Endothelial cell of umbilical vein (primary cell): ENCODE measurements at regions of chr2 and their contacts with region 1.

Region 1: GRCh38 chr2:237154082-237154638 is 68.5 kb downstream of the COPS8 start:
- DNase-seq: peak; percentile 59
- H3K4me3 ChIP-seq: no peak overlapping the region
- H3K27ac ChIP-seq: no peak overlapping the region
- H3K4me1 ChIP-seq: peaks cover 8% of the 10 kb centered on the region
- H3K27me3 ChIP-seq: no peaks in the 10 kb centered on the region
- CTCF ChIP-seq: peak; percentile 73 to 75
- POLR2A ChIP-seq: no peak

Region 2: DNA sequence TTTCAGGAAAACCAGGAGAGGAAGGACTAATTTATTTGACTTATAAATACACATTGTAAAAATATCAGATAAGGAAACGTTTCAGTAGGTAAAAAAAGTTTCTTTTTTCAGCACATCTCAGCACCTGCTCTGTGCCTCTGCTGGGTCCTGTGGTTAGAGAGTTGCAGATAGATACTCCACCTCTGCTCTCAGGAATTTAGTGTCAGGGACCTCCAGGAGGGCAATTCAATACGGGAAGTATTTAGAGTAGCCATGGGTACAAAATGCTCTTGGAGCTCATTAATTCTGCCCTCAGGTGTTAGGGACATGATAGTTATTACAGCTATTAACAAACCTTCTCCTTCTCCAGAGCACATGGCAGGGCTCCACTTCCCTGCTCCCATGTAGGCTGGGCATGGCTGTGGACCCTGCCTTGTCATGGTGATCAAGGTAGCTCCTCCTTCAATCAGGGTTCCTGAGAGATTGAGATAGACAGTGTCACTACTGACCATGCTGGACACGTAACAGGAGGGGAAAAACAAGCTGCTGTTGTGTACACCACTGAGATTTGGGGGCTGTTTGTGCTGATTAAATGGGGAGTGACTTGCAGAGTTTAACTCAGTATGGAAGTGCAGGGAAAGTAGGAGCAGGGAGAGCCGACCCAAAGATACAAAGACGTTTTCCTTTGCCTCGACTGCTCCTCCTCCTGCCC is 254.1 kb before region 1 on chr2:
- CTCF ChIA-PET with region 1: no interaction called
- POLR2A ChIA-PET with region 1: no interaction called
- dilution Hi-C with region 1: no loop called
- intact Hi-C with region 1: no loop called
- DNase-seq: no peak
- H3K4me3 ChIP-seq: no peak overlapping the region
- H3K27ac ChIP-seq: no peak overlapping the region
- H3K4me1 ChIP-seq: no peaks in the 10 kb centered on the region
- H3K27me3 ChIP-seq: peaks cover 0 to 2% of the 10 kb centered on the region in 2 experiments
- CTCF ChIP-seq: no peak
- POLR2A ChIP-seq: no peak

Region 3: DNA sequence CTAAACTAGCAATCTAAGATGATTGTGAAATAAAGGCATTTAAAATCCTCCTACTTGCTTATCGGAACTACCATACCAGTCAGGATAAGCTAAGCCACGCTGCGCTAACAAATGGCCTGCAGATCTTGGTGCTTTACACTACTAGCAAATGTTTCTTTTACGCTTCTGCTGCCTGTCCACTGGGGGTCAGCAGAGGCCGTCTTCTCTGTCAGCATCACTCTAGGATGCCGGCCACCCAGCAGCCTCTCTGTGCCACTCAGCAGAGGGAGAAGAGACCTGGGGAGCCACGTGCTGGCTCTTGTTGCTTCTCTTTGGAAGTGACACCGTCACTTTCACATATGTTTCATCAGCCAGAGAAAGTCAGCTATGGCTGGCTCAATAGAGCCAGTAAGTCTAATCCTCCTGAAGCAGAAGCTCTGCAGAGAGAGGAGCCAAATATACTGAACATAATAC is 31.9 kb before region 1 on chr2:
- CTCF ChIA-PET with region 1: interaction called, 7 read pairs
- POLR2A ChIA-PET with region 1: no interaction called
- dilution Hi-C with region 1: no loop called
- intact Hi-C with region 1: loop called (anchors 2 kb)
- DNase-seq: peak; percentile 64
- H3K4me3 ChIP-seq: no peak overlapping the region
- H3K27ac ChIP-seq: no peak overlapping the region
- H3K4me1 ChIP-seq: peaks cover 3% of the 10 kb centered on the region
- H3K27me3 ChIP-seq: no peaks in the 10 kb centered on the region
- CTCF ChIP-seq: peak; percentile 64 to 73
- POLR2A ChIP-seq: no peak

Region 4: GRCh38 chr2:237291138-237291792 is 137.1 kb after region 1 on chr2:
- CTCF ChIA-PET with region 1: interaction called, 3 read pairs
- POLR2A ChIA-PET with region 1: no interaction called
- dilution Hi-C with region 1: no loop called
- intact Hi-C with region 1: loop called (anchors 2 kb)
- DNase-seq: peak; percentile 99
- H3K4me3 ChIP-seq: peak overlapping the region in 2 of 3 experiments; percentile 15 to 36
- H3K27ac ChIP-seq: peak overlapping the region; percentile 95
- H3K4me1 ChIP-seq: peaks cover 35% of the 10 kb centered on the region
- H3K27me3 ChIP-seq: no peaks in the 10 kb centered on the region
- CTCF ChIP-seq: no peak
- POLR2A ChIP-seq: no peak

Region 5: GRCh38 chr2:237322564-237322963 is 168.4 kb after region 1 on chr2:
- CTCF ChIA-PET with region 1: no interaction called
- POLR2A ChIA-PET with region 1: no interaction called
- dilution Hi-C with region 1: no loop called
- intact Hi-C with region 1: loop called (anchors 5 kb)
- DNase-seq: no peak
- H3K4me3 ChIP-seq: no peak overlapping the region
- H3K27ac ChIP-seq: no peak overlapping the region
- H3K4me1 ChIP-seq: no peaks in the 10 kb centered on the region
- H3K27me3 ChIP-seq: peaks cover 4 to 7% of the 10 kb centered on the region in 2 experiments
- CTCF ChIP-seq: peak in 1 of 2 donors; percentile 42
- POLR2A ChIP-seq: no peak

Region 6: GRCh38 chr2:237413777-237414661 is 259.9 kb after region 1 on chr2 and contains the start of gene COL6A3:
- CTCF ChIA-PET with region 1: interaction called, 22 read pairs
- POLR2A ChIA-PET with region 1: no interaction called
- dilution Hi-C with region 1: no loop called
- intact Hi-C with region 1: loop called (anchors 1 kb)
- DNase-seq: no peak
- H3K4me3 ChIP-seq: no peak within 1 kb of the TSS
- H3K27ac ChIP-seq: no peak within 1 kb of the TSS
- H3K4me1 ChIP-seq: no peaks in the 10 kb centered on the region
- H3K27me3 ChIP-seq: peaks cover 7 to 15% of the 10 kb centered on the region in 2 experiments
- CTCF ChIP-seq: no peak
- POLR2A ChIP-seq: no peak
- total RNA-seq, gene COL6A3: not detected in 2 replicates

Region 7: DNA sequence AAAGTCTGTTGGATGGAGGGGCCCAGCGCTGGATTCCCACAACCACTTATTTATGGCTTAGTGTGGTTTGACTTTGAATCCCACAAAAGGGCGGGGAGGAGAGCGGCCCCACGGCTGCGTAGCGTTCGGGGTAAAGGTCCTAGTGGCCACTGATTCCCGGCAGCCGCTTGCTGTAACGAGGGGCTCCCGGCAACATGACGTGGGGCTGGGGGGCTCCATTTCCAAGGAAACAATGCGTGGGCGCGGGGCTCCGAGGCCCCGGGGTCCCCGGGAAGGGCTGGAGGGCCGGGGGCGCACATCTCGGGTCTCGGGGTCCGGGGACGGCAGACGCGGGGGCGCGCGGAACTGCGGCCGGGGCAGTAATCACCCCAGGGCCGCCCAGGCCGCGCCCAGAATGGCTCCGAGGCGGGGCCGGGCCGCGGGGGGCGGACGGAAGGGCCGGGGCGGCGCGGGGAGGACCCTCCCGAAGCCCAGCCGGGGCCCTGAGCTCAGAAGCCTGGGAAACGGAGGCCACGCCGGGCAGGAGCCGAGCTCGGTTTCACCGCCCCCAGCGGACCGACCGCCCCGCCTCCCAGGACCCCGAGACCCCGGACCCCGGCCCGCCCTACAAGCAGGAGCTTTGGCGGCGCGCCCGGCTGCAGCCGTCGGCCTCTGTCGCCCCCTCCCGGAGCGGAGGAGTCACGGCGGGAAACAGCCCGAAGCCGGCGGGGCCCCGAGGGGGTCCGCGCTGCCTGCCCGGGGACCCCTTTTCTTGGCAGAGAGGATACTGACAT is 321.0 kb after region 1 on chr2:
- CTCF ChIA-PET with region 1: interaction called, 8 read pairs
- POLR2A ChIA-PET with region 1: no interaction called
- dilution Hi-C with region 1: no loop called
- intact Hi-C with region 1: loop called (anchors 1 kb)
- DNase-seq: peak; percentile 54
- H3K4me3 ChIP-seq: peak overlapping the region; percentile 38 to 51 (median 40)
- H3K27ac ChIP-seq: peak overlapping the region; percentile 23
- H3K4me1 ChIP-seq: peaks cover 12% of the 10 kb centered on the region
- H3K27me3 ChIP-seq: peaks cover 36 to 42% of the 10 kb centered on the region in 2 experiments
- CTCF ChIP-seq: peak; percentile 73 to 93
- POLR2A ChIP-seq: peak; percentile 23